WTC11 (cell line): ENCODE measurements at regions of chr3 and their contacts with region 1.

Region 1: DNA sequence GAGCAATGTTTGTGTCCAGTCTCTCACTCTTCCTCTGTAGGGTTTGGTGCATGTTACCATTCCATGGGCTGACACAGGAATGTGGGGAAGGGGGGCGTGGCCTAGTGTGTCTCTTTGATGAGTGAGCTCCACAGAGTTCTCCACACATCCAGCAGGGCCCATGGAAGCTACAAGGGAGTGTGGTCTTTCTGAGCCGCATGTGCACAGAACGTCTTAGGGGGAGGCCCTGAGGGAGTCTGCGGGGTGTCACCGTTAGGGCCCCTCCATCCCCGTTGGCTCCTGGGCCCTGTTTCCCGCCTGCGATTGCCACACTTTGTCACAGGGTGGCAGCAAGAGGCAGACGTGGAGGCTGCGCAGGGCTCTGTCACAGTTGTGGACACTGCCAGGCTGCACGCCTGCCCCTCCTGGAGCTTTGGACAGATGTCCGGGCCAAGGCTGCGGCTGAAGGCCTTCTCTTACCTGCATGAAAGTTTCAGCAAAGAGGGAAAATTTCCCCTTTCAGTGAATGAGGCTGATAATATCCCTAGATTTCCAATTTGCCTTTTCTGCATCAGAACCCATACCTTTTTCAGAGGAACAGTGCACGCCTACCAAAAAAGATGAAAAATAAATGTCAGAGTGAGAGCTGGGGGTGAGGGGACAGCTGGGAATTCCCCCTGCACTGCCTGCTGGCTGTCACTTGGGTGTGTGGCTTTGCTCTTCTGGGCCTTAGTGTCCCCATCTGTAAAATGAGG is 24.3 kb downstream of the CACNA2D3 start:
- DNase-seq: peak; percentile 83
- ATAC-seq: peak; percentile 96
- H3K4me3 Mint-ChIP-seq: peak overlapping the region; percentile 41; the same call in 1 of the 2 replicates
- H3K27ac Mint-ChIP-seq: no peak overlapping the region
- H3K4me1 Mint-ChIP-seq: peaks cover 15% of the 10 kb centered on the region
- H3K27me3 Mint-ChIP-seq: no peaks in the 10 kb centered on the region; the same call in 1 of the 2 replicates
- CTCF ChIP-seq: peak; percentile 55

Region 2: DNA sequence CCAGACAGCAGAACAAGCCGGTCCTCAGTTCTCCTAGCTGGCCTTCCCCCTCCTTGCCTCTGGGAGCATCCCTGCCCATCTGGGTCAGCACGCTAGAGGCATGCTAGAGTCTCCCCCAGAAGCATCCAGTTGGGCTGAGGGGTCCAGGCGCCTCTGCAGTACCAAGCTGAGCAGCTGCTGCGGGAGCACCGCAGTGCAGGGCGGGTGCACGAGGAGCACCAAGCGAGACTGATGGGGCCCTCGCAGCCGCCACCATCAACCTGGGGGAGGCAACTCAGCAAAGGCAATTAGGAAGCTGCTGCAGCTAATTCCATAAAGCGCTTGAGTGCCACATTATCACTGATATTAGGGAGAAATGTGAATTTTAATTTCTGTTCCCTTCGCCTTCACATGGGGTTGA is 12.0 kb before region 1 on chr3:
- CTCF ChIA-PET with region 1: interaction called, 14 read pairs
- POLR2A ChIA-PET with region 1: no interaction called
- DNase-seq: no peak
- ATAC-seq: peak; percentile 28
- H3K4me3 Mint-ChIP-seq: no peak overlapping the region
- H3K27ac Mint-ChIP-seq: no peak overlapping the region
- H3K4me1 Mint-ChIP-seq: peaks cover 73% of the 10 kb centered on the region
- H3K27me3 Mint-ChIP-seq: no peaks in the 10 kb centered on the region; the same call in 1 of the 2 replicates
- CTCF ChIP-seq: no peak

Region 3: DNA sequence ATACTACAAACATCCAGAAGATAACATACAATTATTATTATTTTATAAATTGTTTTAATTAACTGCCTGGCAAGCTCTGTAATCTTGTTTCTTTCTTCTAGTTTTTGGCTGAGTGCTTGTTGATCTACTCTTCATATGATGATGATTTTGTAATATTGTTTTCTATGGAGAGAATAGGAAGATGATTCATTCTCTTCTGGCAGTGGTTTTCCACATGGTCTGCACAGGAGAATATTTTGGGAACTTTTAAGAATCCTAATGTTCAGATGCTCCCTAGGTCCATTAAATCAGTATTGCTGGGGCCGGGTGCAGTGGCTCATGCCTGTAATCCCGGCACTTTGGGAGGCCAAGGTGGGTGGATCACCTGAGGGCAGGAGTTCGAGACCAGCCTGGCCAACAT is 13.2 kb after region 1 on chr3:
- CTCF ChIA-PET with region 1: interaction called, 16 read pairs
- POLR2A ChIA-PET with region 1: no interaction called
- DNase-seq: no peak
- ATAC-seq: no peak
- H3K4me3 Mint-ChIP-seq: no peak overlapping the region
- H3K27ac Mint-ChIP-seq: no peak overlapping the region
- H3K4me1 Mint-ChIP-seq: peaks cover 16% of the 10 kb centered on the region
- H3K27me3 Mint-ChIP-seq: no peaks in the 10 kb centered on the region
- CTCF ChIP-seq: no peak

Region 4: GRCh38 chr3:54294214-54294613 is 147.5 kb after region 1 on chr3:
- CTCF ChIA-PET with region 1: interaction called, 15 read pairs
- POLR2A ChIA-PET with region 1: no interaction called
- DNase-seq: peak; percentile 17
- ATAC-seq: peak; percentile 70
- H3K4me3 Mint-ChIP-seq: no peak overlapping the region
- H3K27ac Mint-ChIP-seq: peak overlapping the region; percentile 44; the same call in 1 of the 2 replicates
- H3K4me1 Mint-ChIP-seq: peaks cover 26% of the 10 kb centered on the region
- H3K27me3 Mint-ChIP-seq: no peaks in the 10 kb centered on the region; the same call in 1 of the 2 replicates
- CTCF ChIP-seq: no peak

Region 5: DNA sequence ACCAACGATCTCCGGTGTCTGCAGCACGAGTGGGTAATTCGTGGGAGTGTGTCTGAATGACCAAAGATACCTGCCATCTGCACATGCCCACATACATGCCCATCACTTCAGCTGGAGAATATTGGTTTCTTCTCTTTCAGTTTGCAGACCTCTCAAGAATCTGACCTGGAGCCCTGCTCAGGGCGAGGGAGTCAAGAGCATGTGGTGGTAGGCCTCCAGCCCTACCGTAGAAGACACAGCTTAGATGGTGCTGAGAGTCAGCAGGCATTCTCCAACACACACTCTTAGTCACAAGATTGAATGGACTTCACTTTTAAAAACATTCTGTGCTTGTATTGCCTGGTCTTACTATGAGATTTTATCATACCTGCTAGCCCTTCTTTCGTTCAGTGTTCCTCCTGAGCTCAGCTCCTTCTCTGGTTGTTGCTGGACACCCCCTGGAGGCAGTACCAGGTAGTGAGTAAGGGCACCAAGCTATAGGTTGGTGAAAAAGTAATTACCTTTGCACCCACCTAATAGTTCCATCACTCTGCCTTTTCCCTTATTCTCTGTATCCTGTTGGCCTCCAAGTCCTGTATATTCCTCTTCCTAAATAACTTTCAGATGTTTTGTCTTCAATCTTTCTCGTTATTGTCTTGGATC is 227.7 kb after region 1 on chr3:
- CTCF ChIA-PET with region 1: interaction called, 50 read pairs
- POLR2A ChIA-PET with region 1: no interaction called
- DNase-seq: peak; percentile 62
- ATAC-seq: peak; percentile 94
- H3K4me3 Mint-ChIP-seq: no peak overlapping the region
- H3K27ac Mint-ChIP-seq: no peak overlapping the region
- H3K4me1 Mint-ChIP-seq: no peaks in the 10 kb centered on the region
- H3K27me3 Mint-ChIP-seq: no peaks in the 10 kb centered on the region
- CTCF ChIP-seq: peak; percentile 60

Region 6: GRCh38 chr3:54427941-54428871 is 281.5 kb after region 1 on chr3:
- CTCF ChIA-PET with region 1: interaction called, 13 read pairs
- POLR2A ChIA-PET with region 1: no interaction called
- DNase-seq: peak; percentile 71
- ATAC-seq: peak; percentile 56
- H3K4me3 Mint-ChIP-seq: no peak overlapping the region
- H3K27ac Mint-ChIP-seq: no peak overlapping the region
- H3K4me1 Mint-ChIP-seq: peaks cover 21% of the 10 kb centered on the region
- H3K27me3 Mint-ChIP-seq: no peaks in the 10 kb centered on the region
- CTCF ChIP-seq: peak; percentile 48; the same call in 1 of the 2 replicates